ENCODE measurements at regions of chr20 and their contacts with region 1.

Region 1: GRCh38 chr20:1313236-1313964 is 15.5 kb downstream of the SDCBP2 start:
- DNase-seq: peak; percentile 80 to 92
- ATAC-seq: peak; percentile 83
- H3K4me3 ChIP-seq: no peak overlapping the region
- H3K27ac ChIP-seq: no peak overlapping the region
- H3K4me1 ChIP-seq: no peaks in the 10 kb centered on the region
- H3K27me3 ChIP-seq: no peaks in the 10 kb centered on the region

Region 2: DNA sequence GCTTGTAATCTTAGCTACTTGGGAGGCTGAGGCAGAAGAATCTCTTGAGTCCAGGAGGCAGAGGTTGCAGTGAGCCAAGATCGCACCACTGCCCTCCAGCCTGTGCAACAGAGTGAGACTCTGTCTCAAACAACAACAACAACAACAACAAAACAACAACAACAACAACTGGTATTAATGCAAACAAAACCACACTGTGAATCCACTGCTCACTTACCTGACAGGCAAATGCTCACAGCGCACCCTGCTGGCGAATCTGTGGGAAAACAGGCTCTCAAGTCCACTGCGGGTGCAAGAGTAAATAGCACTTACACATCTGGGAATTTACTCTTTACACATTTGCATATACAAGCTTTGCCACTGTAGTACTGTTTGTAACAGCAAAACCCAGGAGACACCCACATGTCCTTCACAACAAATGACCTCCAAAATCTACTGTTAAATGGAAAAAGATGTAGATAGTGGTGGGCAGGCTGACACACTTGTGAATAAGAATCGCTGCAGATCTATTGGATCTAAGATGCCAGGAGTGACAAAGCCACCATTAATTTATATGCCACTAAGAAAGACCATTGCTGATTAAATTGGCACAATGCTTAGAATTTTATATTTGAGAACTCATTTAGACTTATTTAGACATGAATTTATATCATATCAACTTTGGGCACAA is 124.0 kb after region 1 on chr20:
- intact Hi-C with region 1: loop called (anchors 1 to 2 kb)
- DNase-seq: peak; percentile 82 to 89
- ATAC-seq: peak; percentile 64
- H3K4me3 ChIP-seq: no peak overlapping the region
- H3K27ac ChIP-seq: no peak overlapping the region
- H3K4me1 ChIP-seq: no peaks in the 10 kb centered on the region
- H3K27me3 ChIP-seq: no peaks in the 10 kb centered on the region

Measured in aorta (tissue), 5 donors.